Activated T-helper 2 cell treated with anti-CD3 and anti-CD28 coated beads, Interferon-gamma antibody, Interleukin-2, Interleukin-4, amounts not matched to agents 10 μg/mL and 5 μg/mL and 100 μg/mL, durations not matched to agents 14 hours and 24 hours and 36 hours (primary cell): ENCODE measurements at regions of chr1 and their contacts with region 1.

Region 1: DNA sequence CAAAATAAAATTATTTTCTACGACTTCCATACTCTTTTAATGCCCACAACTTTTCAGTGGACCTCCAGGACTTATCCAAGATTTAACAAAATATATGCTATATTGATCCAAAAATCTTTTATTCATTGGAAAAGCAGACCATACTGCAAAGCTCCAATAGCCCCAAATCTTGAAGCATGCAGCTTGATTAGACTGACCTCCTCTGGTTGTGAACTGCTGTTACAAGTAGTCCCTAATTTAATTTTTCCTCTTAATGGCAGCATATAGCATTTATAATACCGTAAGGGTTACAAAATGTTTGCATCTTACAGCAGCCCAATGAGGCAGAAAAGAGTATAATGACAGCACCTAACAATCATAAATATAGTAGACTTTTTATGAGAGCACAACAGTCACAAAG is 49.8 kb downstream of the TPR start:
- DNase-seq: no peak
- H3K4me3 Mint-ChIP-seq: no peak overlapping the region
- H3K27ac Mint-ChIP-seq: no peak overlapping the region
- H3K4me1 Mint-ChIP-seq: peaks cover 23% of the 10 kb centered on the region
- H3K27me3 Mint-ChIP-seq: no peaks in the 10 kb centered on the region

Region 2: DNA sequence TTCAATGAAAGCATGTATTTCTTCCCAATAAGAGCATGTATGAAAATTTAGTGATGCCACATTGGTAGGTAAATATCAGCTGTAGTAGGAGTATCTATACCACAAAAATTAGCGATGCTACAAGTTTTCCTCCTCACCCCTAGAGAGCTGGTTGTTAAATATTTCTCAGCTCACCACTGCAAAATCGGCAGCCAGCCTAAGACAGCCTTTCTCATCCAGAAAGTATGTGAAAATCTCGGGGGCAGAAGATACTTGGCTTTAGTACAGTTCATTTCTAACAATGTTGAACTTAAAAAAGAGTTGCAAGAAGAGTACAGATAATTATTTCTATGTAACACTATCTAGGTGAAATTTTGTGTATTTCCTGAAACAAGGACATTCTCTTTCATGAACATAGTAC is 185.5 kb before region 1 on chr1:
- intact Hi-C with region 1: no loop called
- DNase-seq: no peak
- H3K4me3 Mint-ChIP-seq: no peak overlapping the region
- H3K27ac Mint-ChIP-seq: no peak overlapping the region
- H3K4me1 Mint-ChIP-seq: no peaks in the 10 kb centered on the region
- H3K27me3 Mint-ChIP-seq: peaks cover 2% of the 10 kb centered on the region

Region 3: GRCh38 chr1:186363891-186364290 is 38.7 kb after region 1 on chr1:
- intact Hi-C with region 1: loop called (anchors 5 kb)
- DNase-seq: no peak
- H3K4me3 Mint-ChIP-seq: no peak overlapping the region
- H3K27ac Mint-ChIP-seq: no peak overlapping the region
- H3K4me1 Mint-ChIP-seq: peaks cover 5% of the 10 kb centered on the region
- H3K27me3 Mint-ChIP-seq: no peaks in the 10 kb centered on the region